ENCODE measurements at regions of chr22 and their contacts with region 1.

Region 1: DNA sequence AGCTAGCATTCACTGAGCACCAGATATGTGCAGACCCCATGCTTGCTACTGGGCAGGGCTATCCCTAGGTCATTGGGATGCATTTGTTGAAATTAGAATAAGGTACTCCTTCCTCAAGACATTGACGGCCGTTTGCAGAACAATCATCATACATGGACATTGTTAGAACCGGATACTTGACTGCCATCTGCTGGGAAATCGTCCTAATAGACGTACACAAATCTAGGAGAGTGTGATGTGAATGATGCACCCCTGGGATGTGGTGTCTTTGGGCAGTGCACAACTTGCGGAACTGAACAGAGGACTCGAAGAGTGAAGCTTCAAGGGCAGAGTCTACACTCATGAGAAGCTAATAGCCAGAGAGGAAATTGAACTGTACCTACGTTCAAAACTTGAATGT is 35.9 kb downstream of the MYO18B start:
- DNase-seq: peak; percentile 74
- H3K4me3 ChIP-seq: no peak overlapping the region
- H3K27ac ChIP-seq: no peak overlapping the region
- H3K4me1 ChIP-seq: peaks cover 0 to 45% of the 10 kb centered on the region in 2 experiments; a peak in 2 of 4 replicates
- H3K27me3 ChIP-seq: no peaks in the 10 kb centered on the region
- CTCF ChIP-seq: peak; percentile 50
- EP300 ChIP-seq: no peak
- RAD21 ChIP-seq: peak; percentile 65

Region 2: DNA sequence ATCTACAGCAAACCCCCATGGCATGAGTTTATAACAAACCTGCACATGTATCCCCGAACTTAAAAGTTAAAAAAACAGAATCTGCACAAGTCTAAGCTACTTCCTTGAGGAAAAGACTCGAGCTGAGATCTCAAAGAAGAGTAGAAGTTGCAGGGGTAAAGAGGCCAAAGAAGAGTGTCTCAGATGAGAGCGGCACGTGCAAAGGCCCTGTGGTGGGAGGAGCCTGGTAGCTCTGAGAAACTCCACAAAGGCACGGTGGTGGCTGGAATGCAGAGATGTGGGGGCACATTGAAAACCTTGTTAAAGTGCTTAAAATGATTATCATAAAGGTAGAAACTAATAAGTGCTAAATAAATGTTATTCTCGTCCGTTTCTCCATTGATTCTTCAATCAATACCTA is 316.6 kb before region 1 on chr22:
- CTCF ChIA-PET with region 1: interaction called, 30 read pairs
- POLR2A ChIA-PET with region 1: no interaction called
- DNase-seq: no peak
- H3K4me3 ChIP-seq: no peak overlapping the region
- H3K27ac ChIP-seq: no peak overlapping the region
- H3K4me1 ChIP-seq: no peaks in the 10 kb centered on the region; a peak in 1 of 4 replicates
- H3K27me3 ChIP-seq: no peaks in the 10 kb centered on the region
- CTCF ChIP-seq: no peak
- EP300 ChIP-seq: no peak
- RAD21 ChIP-seq: no peak

Region 3: GRCh38 chr22:25714739-25715138 is 63.1 kb before region 1 on chr22:
- CTCF ChIA-PET with region 1: interaction called, 18 read pairs
- POLR2A ChIA-PET with region 1: no interaction called
- DNase-seq: no peak
- H3K4me3 ChIP-seq: no peak overlapping the region
- H3K27ac ChIP-seq: no peak overlapping the region
- H3K4me1 ChIP-seq: no peaks in the 10 kb centered on the region; a peak in 2 of 4 replicates
- H3K27me3 ChIP-seq: no peaks in the 10 kb centered on the region
- CTCF ChIP-seq: no peak
- EP300 ChIP-seq: no peak
- RAD21 ChIP-seq: no peak

Region 4: DNA sequence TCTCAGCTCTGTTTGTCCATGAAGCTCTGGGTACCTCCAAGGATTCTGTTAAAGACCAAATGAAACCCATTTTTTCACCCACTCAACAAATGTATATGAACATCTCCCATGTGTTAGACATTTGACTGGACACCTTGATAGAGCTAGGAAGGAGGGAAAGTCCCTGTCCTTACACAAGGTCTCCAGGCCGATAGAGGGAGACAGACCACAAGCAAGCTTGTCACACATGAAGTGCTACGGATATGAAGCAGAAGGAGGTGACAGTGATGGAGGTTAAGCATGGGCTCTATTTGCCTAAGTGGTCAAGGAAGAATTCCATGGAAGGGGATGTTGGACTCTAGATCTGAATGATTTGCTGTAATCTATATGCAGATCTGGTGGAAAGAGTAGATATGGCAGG is 102.7 kb after region 1 on chr22:
- CTCF ChIA-PET with region 1: no interaction called
- POLR2A ChIA-PET with region 1: no interaction called
- DNase-seq: no peak
- H3K4me3 ChIP-seq: no peak overlapping the region
- H3K27ac ChIP-seq: no peak overlapping the region
- H3K4me1 ChIP-seq: no peaks in the 10 kb centered on the region; a peak in 1 of 4 replicates
- H3K27me3 ChIP-seq: no peaks in the 10 kb centered on the region
- CTCF ChIP-seq: no peak
- EP300 ChIP-seq: no peak
- RAD21 ChIP-seq: no peak

Region 5: GRCh38 chr22:26330966-26331625 is 553.2 kb after region 1 on chr22:
- CTCF ChIA-PET with region 1: interaction called, 65 read pairs
- POLR2A ChIA-PET with region 1: no interaction called
- DNase-seq: peak; percentile 81
- H3K4me3 ChIP-seq: no peak overlapping the region; a peak in 1 of 4 replicates
- H3K27ac ChIP-seq: no peak overlapping the region
- H3K4me1 ChIP-seq: peaks cover 0 to 3% of the 10 kb centered on the region in 2 experiments; a peak in 1 of 4 replicates
- H3K27me3 ChIP-seq: no peaks in the 10 kb centered on the region
- CTCF ChIP-seq: peak; percentile 85
- EP300 ChIP-seq: no peak
- RAD21 ChIP-seq: peak; percentile 96

Region 6: GRCh38 chr22:26364066-26365015 is 586.5 kb after region 1 on chr22:
- CTCF ChIA-PET with region 1: interaction called, 29 read pairs
- POLR2A ChIA-PET with region 1: no interaction called
- DNase-seq: peak; percentile 73
- H3K4me3 ChIP-seq: no peak overlapping the region
- H3K27ac ChIP-seq: no peak overlapping the region
- H3K4me1 ChIP-seq: peaks cover 0 to 7% of the 10 kb centered on the region in 2 experiments; a peak in 2 of 4 replicates
- H3K27me3 ChIP-seq: no peaks in the 10 kb centered on the region
- CTCF ChIP-seq: peak; percentile 75
- EP300 ChIP-seq: peak in 1 of 2 experiments; percentile 20; a peak in 1 of 4 replicates
- RAD21 ChIP-seq: peak; percentile 87

Measured in SK-N-SH (cell line).